A549 (cell line): ENCODE measurements at regions of chr5 and their contacts with region 1.

Region 1: DNA sequence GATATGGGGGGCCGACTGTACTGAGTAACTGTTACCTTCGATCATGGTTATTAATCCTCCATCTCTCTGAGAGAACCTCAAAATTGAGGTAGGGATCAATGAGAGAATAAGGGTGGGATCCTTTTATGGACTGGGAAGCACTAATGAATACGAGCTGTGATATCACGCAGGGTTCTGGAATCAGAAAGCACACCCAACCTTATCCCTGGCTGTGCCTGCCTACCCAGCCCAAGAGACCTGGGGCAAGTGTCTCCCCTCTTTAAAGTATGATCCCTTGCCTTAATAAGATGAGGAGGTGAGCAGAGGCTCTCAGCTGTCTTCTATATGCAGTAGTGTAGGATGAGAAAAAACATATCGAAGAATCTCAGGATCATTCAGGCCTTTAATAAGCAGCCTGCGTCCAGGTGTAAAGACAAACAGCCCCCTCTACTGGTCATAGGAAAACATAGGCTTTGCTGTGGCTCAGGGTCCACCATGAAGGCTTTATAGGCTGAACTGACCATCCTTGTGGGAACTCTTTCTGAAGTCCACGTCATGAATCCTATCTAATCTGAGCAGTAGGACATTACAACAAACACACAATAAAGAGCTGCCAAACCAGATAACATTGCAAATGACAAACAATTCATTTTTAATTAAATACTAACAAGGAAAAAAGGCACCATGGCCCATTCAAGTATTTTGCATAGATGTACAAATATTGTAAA is 16.8 kb downstream of the NIPAL4 start:
- DNase-seq: peak; percentile 78 to 87
- ATAC-seq: peak; percentile 84 to 92
- H3K4me3 ChIP-seq: no peak overlapping the region
- H3K27ac ChIP-seq: peak overlapping the region in 1 of 2 experiments; percentile 49; a peak in 1 of 6 replicates
- H3K4me1 ChIP-seq: peaks cover 22% of the 10 kb centered on the region
- CTCF ChIP-seq: peak; percentile 94
- EP300 ChIP-seq: no peak
- POLR2A ChIP-seq: no peak
- RAD21 ChIP-seq: peak; percentile 94 to 97

Region 2: GRCh38 chr5:157189223-157189622 is 287.6 kb before region 1 on chr5:
- CTCF ChIA-PET with region 1: no interaction called
- POLR2A ChIA-PET with region 1: no interaction called
- DNase-seq: no peak
- ATAC-seq: no peak
- H3K4me3 ChIP-seq: no peak overlapping the region
- H3K27ac ChIP-seq: no peak overlapping the region
- H3K4me1 ChIP-seq: no peaks in the 10 kb centered on the region
- CTCF ChIP-seq: no peak
- EP300 ChIP-seq: no peak
- POLR2A ChIP-seq: no peak
- RAD21 ChIP-seq: no peak

Region 3: DNA sequence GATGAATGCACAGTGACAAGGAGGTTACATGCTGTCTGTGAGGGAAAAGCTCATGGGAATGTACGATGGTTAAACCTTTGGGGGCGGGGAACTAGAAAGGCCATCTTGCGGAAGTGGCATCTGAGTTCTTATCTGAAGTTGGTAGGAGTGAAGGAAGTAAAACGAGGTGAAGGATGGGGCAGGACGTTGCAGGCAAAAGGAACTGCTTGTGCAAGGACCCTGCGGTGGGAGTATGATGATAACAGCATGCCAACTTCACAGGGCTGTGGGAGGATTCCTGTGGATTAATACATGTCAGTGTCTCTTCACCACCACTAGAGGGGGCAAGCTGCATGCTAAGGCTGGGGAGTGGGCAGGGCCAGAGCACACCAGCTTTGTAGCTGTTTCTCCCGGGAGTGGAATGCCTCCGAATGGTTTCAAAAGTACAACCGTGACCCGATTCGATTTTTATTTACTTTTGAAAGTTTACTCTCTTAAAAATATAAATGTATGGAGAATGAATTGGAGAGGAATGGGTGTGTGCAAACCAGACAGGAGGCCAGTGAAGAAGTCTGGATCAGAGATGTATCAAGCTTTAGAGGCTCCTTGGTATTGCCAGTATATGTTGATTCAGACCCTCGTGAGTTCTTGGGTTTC is 148.5 kb before region 1 on chr5:
- CTCF ChIA-PET with region 1: interaction called, 128 read pairs
- POLR2A ChIA-PET with region 1: no interaction called
- DNase-seq: peak; percentile 77 to 89
- ATAC-seq: peak; percentile 97 to 100
- H3K4me3 ChIP-seq: no peak overlapping the region
- H3K27ac ChIP-seq: peak overlapping the region in 1 of 2 experiments; percentile 42; a peak in 1 of 6 replicates
- H3K4me1 ChIP-seq: no peaks in the 10 kb centered on the region
- CTCF ChIP-seq: peak; percentile 95
- EP300 ChIP-seq: no peak
- POLR2A ChIP-seq: no peak
- RAD21 ChIP-seq: peak; percentile 91 to 93

Region 4: DNA sequence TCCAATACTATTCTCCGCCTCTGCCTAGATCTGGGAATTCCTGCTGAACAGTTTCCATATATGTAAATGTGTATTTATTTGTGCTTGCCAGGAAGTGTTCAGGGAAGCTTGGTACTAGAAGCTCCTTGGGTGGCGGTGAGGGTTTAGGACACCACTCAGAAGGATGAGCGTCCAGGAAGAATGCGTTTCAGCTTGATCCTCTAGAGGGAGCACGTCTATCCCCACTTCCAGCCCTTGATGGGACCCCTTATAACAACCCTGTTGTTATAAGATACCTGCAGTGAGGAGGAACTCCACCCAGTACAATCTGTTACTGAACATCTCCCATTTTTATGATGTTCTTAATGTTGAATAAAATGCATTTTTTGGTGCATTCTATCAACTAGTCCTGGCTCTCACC is 122.1 kb before region 1 on chr5:
- CTCF ChIA-PET with region 1: interaction called, 35 read pairs
- POLR2A ChIA-PET with region 1: no interaction called
- DNase-seq: peak; percentile 19 to 21
- ATAC-seq: peak; percentile 56 to 86; a peak in 4 of 6 replicates
- H3K4me3 ChIP-seq: no peak overlapping the region
- H3K27ac ChIP-seq: no peak overlapping the region
- H3K4me1 ChIP-seq: no peaks in the 10 kb centered on the region
- CTCF ChIP-seq: peak; percentile 46
- EP300 ChIP-seq: no peak
- POLR2A ChIP-seq: no peak
- RAD21 ChIP-seq: peak in 1 of 2 experiments; percentile 19; a peak in 1 of 5 replicates

Region 5: DNA sequence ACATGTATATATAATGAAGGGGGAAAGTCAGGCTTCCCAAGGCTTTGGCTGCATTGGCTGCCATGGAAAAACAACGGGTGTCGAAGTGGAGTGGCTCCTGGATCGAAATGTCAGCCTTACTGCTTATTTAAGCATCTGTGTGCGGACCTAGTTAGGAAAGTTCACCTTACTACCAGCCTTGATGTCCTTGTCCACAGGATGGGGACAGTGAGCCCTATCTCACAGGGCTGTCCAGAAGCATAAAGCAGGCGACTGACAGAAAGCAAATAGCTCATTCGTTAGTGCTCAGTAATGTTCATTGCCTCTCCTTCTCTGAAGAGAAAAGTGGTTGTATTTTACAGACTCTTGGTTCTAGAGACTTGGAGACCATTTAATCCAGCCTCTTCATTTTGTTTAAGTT is 98.4 kb before region 1 on chr5:
- CTCF ChIA-PET with region 1: interaction called, 15 read pairs
- POLR2A ChIA-PET with region 1: no interaction called
- DNase-seq: peak in 1 of 2 experiments; percentile 30
- ATAC-seq: peak in 1 of 2 experiments; percentile 62; a peak in 2 of 6 replicates
- H3K4me3 ChIP-seq: no peak overlapping the region
- H3K27ac ChIP-seq: no peak overlapping the region
- H3K4me1 ChIP-seq: peaks cover 5% of the 10 kb centered on the region
- CTCF ChIP-seq: no peak
- EP300 ChIP-seq: no peak
- POLR2A ChIP-seq: no peak
- RAD21 ChIP-seq: peak; percentile 25 to 46; a peak in 3 of 5 replicates

Region 6: DNA sequence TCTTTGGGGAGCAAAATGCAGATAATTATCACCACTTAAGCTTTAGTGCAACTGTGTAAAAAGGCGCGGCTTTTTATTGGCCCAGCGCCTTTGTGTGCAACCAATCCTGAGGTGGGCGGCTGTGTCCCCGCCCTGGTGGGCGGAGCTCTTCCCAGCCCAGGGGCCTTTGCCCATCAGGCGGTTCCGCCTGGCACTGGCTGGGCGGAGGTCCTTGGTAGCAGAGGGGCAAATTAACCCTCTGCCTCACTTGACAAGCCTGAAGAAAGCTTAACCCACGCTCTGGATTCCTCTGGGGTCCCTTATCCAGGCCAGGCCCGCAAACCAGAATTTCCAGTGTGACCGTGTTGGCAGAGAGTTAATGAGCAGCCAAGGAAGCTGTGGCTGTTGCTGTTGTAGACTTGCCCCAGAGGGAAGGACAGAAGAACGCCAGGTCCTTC is 29.6 kb before region 1 on chr5:
- CTCF ChIA-PET with region 1: interaction called, 11 read pairs
- POLR2A ChIA-PET with region 1: no interaction called
- DNase-seq: no peak
- ATAC-seq: no peak
- H3K4me3 ChIP-seq: no peak overlapping the region
- H3K27ac ChIP-seq: no peak overlapping the region
- H3K4me1 ChIP-seq: no peaks in the 10 kb centered on the region
- CTCF ChIP-seq: no peak
- EP300 ChIP-seq: no peak
- POLR2A ChIP-seq: no peak
- RAD21 ChIP-seq: no peak

Region 7: DNA sequence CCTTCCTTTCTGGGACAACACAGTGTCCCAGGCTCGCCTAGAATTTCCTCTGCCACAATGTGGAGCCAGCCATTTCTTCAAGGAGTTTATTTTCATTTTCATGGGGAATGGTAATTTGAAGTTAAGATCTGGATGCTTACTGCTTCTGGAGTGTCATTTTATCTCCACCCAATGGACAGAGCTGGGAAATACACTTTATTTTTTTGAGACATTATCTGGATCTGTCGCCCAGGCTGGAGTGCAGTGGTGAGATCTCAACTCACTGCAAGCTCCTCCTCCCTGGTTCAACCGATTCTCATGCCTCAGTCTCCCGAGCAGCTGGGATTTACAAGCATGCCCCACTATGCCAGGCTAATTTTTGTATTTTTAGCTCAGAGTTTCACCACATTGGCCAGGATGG is 241.7 kb after region 1 on chr5:
- CTCF ChIA-PET with region 1: interaction called, 16 read pairs
- POLR2A ChIA-PET with region 1: no interaction called
- DNase-seq: peak; percentile 55 to 56
- ATAC-seq: peak; percentile 85 to 95; a peak in 5 of 6 replicates
- H3K4me3 ChIP-seq: no peak overlapping the region
- H3K27ac ChIP-seq: peak overlapping the region in 1 of 2 experiments; percentile 19; a peak in 1 of 6 replicates
- H3K4me1 ChIP-seq: no peaks in the 10 kb centered on the region
- CTCF ChIP-seq: peak; percentile 71
- EP300 ChIP-seq: no peak
- POLR2A ChIP-seq: no peak
- RAD21 ChIP-seq: peak; percentile 84 to 86